ENCODE measurements at regions of chr20 and their contacts with region 1.

Region 1: DNA sequence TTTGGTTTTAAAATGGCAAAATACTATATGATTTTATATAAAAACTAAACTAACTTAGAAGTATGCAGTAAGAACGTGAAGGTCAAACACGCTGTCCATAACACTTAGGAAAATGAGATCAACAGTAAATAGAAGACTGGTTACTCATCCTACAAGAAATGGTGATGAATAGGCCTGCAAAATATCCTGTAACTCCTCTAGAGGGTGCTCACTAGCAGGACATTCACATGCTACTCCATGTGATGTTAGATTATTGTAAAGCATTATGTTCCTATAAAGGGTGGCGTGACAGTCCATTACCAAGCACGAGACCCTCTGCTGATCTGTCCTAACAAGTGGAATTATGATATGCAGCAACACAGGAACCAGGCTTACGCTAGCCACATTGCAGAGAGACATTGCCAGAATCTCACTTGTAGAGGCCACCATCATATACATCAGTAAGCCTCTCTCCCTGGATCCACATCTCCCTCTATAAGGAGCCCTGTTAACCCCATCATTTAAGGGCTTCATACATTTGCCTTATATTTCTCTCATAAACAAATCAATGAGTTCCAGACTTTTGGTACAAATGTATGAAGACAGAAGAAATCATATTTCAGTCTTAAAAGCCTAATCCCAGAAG is 18.0 kb upstream of the DEFB129 start:
- H3K4me3 ChIP-seq: no peak overlapping the region
- H3K27ac ChIP-seq: no peak overlapping the region
- H3K4me1 ChIP-seq: 0 out of 2 replicates have a peak, but pooled peaks cover 2% of the 10 kb centered on the region
- CTCF ChIP-seq: no peak

Region 2: GRCh38 chr20:219290-220115 is 10.4 kb after region 1 on chr20:
- CTCF ChIA-PET with region 1: interaction called, 16 read pairs
- POLR2A ChIA-PET with region 1: no interaction called
- H3K4me3 ChIP-seq: no peak overlapping the region
- H3K27ac ChIP-seq: no peak overlapping the region
- H3K4me1 ChIP-seq: no peaks in the 10 kb centered on the region
- CTCF ChIP-seq: peak; percentile 75

Measured in HEK293 (cell line).